Testis (tissue), 5 donors: ENCODE measurements at regions of chr6 and their contacts with region 1.

Region 1: GRCh38 chr6:26097268-26097875 is 10.1 kb downstream of the HFE start:
- DNase-seq: peak; percentile 79
- H3K4me3 ChIP-seq: no peak overlapping the region
- H3K27ac ChIP-seq: no peak overlapping the region
- H3K4me1 ChIP-seq: no peaks in the 10 kb centered on the region
- H3K27me3 ChIP-seq: no peaks in the 10 kb centered on the region
- CTCF ChIP-seq: peak; percentile 76 to 82 (median 77)
- POLR2A ChIP-seq: no peak

Region 2: DNA sequence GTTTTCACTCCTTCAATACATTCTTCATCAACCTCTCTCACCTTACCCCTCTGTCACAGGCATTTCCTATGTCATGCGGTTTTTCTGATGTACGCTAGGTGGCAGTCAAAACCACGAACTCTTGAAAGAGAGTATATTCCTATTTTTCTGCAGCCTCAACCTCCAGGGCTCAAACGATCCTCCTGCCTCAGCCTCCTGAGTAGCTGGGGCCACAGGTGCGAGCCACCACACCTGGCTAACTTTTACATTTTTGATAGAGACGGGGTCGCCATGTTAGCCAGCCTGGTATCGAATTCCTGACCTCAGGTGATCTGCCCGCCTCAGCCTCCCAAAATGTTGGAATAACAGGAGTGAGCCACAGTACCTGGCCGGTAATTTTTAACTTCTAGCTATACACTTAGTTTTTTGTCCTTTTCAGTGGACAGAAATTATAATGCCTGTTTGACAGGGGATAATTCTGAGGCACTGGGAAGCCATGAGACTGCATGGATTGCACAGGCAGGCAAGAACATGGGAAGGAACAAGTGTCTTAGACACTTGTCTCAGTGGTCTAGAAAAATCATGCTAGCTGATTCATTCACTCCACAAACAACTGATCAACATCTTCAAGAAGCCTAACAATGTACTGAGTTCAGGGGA is 32.6 kb before region 1 on chr6:
- intact Hi-C with region 1: loop called (anchors 5 kb)
- DNase-seq: no peak
- H3K4me3 ChIP-seq: no peak overlapping the region
- H3K27ac ChIP-seq: no peak overlapping the region
- H3K4me1 ChIP-seq: no peaks in the 10 kb centered on the region
- H3K27me3 ChIP-seq: no peaks in the 10 kb centered on the region
- CTCF ChIP-seq: peak; percentile 57 to 80 (median 71)
- POLR2A ChIP-seq: no peak

Region 3: GRCh38 chr6:26223650-26224546 is 126.5 kb after region 1 on chr6:
- intact Hi-C with region 1: no loop called
- DNase-seq: peak; percentile 81
- H3K4me3 ChIP-seq: peak overlapping the region; percentile 46 to 60
- H3K27ac ChIP-seq: peak overlapping the region; percentile 75 to 77
- H3K4me1 ChIP-seq: peaks cover 8% of the 10 kb centered on the region
- H3K27me3 ChIP-seq: no peaks in the 10 kb centered on the region
- CTCF ChIP-seq: no peak
- POLR2A ChIP-seq: peak; percentile 11

Region 4: GRCh38 chr6:26249957-26250697 is 152.8 kb after region 1 on chr6:
- intact Hi-C with region 1: no loop called
- DNase-seq: peak; percentile 78
- H3K4me3 ChIP-seq: peak overlapping the region; percentile 38 to 61
- H3K27ac ChIP-seq: peak overlapping the region; percentile 74 to 81
- H3K4me1 ChIP-seq: no peaks in the 10 kb centered on the region
- H3K27me3 ChIP-seq: no peaks in the 10 kb centered on the region
- CTCF ChIP-seq: no peak
- POLR2A ChIP-seq: no peak